ENCODE measurements at regions of chr10 and their contacts with region 1.

Region 1: GRCh38 chr10:131874991-131875451 is 25.8 kb upstream of the PPP2R2D start:
- DNase-seq: peak; percentile 81
- H3K4me3 Mint-ChIP-seq: no peak overlapping the region
- H3K27ac Mint-ChIP-seq: no peak overlapping the region
- H3K4me1 Mint-ChIP-seq: peaks cover 3% of the 10 kb centered on the region
- H3K27me3 Mint-ChIP-seq: peaks cover 13% of the 10 kb centered on the region

Region 2: DNA sequence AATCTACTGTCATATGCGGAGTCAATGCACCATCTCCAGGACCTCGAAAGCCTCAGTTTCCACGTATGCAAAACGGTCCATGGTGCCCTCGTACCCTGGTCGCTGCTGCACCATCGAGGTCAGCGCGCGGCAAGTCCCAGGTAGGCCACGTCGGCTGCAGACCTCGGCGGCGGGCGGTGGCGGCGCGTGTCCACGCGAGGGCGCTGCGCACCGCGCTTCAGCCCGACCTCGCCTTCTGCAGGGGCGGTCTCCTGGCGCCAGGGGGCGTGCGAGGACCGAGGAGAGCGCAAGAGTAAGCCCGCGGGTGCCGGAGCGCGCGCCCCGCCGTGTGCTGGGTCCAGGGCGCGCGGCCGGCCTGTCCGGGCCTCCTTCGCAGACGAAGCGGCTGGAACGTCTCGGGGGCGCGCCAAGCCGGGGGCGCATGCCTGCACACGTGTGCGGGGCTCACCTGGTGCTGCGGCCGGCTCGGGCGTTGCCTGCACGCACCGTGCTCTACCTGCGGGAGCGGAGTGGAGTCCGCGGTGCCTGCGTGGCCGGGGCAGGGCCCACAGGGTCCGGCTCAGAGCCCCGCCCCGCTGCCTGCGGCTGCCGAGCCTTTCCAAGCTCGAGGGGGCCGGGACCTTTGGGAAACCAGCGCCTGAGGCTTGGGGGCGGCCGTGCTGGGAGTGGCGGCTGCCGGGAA is 1684.8 kb before region 1 on chr10:
- CTCF ChIA-PET with region 1: no interaction called
- intact Hi-C with region 1: loop called (anchors 1 kb)
- DNase-seq: peak; percentile 88
- H3K4me3 Mint-ChIP-seq: peak overlapping the region; percentile 15
- H3K27ac Mint-ChIP-seq: no peak overlapping the region
- H3K4me1 Mint-ChIP-seq: peaks cover 3% of the 10 kb centered on the region
- H3K27me3 Mint-ChIP-seq: peaks cover 6% of the 10 kb centered on the region

Region 3: DNA sequence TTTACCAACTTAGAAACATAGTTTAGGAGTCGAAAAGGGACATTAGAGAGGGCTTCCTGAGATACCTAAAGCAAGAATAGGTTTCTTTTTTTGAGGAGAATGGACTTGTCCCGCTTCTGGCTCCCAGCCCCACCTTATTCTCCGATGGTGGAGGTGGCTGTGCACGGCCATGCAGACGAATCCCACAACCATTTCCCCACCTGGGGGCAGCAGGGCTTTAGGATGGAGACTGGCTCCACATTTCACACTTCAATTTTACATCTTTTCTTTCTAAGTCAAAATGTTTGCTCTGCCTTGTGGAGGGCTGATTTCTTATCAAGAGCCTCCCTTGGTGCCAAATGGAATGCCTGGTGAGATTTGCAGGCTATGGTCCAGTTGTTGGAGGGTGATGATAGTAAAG is 1620.4 kb before region 1 on chr10:
- CTCF ChIA-PET with region 1: no interaction called
- intact Hi-C with region 1: loop called (anchors 10 kb)
- DNase-seq: peak; percentile 62
- H3K4me3 Mint-ChIP-seq: no peak overlapping the region
- H3K27ac Mint-ChIP-seq: no peak overlapping the region
- H3K4me1 Mint-ChIP-seq: no peaks in the 10 kb centered on the region
- H3K27me3 Mint-ChIP-seq: no peaks in the 10 kb centered on the region

Region 4: GRCh38 chr10:131242007-131242406 is 633.0 kb before region 1 on chr10:
- CTCF ChIA-PET with region 1: no interaction called
- intact Hi-C with region 1: loop called (anchors 2 kb)
- DNase-seq: peak; percentile 14
- H3K4me3 Mint-ChIP-seq: no peak overlapping the region
- H3K27ac Mint-ChIP-seq: no peak overlapping the region
- H3K4me1 Mint-ChIP-seq: no peaks in the 10 kb centered on the region
- H3K27me3 Mint-ChIP-seq: peaks cover 11% of the 10 kb centered on the region

Region 5: GRCh38 chr10:131453594-131454355 is 421.2 kb before region 1 on chr10:
- CTCF ChIA-PET with region 1: no interaction called
- intact Hi-C with region 1: loop called (anchors 1 kb)
- DNase-seq: peak; percentile 91
- H3K4me3 Mint-ChIP-seq: peak overlapping the region; percentile 38
- H3K27ac Mint-ChIP-seq: no peak overlapping the region
- H3K4me1 Mint-ChIP-seq: peaks cover 10% of the 10 kb centered on the region
- H3K27me3 Mint-ChIP-seq: peaks cover 23% of the 10 kb centered on the region

Region 6: GRCh38 chr10:131514454-131514853 is 360.6 kb before region 1 on chr10:
- CTCF ChIA-PET with region 1: no interaction called
- intact Hi-C with region 1: no loop called
- DNase-seq: no peak
- H3K4me3 Mint-ChIP-seq: no peak overlapping the region
- H3K27ac Mint-ChIP-seq: no peak overlapping the region
- H3K4me1 Mint-ChIP-seq: no peaks in the 10 kb centered on the region
- H3K27me3 Mint-ChIP-seq: peaks cover 2% of the 10 kb centered on the region

Region 7: DNA sequence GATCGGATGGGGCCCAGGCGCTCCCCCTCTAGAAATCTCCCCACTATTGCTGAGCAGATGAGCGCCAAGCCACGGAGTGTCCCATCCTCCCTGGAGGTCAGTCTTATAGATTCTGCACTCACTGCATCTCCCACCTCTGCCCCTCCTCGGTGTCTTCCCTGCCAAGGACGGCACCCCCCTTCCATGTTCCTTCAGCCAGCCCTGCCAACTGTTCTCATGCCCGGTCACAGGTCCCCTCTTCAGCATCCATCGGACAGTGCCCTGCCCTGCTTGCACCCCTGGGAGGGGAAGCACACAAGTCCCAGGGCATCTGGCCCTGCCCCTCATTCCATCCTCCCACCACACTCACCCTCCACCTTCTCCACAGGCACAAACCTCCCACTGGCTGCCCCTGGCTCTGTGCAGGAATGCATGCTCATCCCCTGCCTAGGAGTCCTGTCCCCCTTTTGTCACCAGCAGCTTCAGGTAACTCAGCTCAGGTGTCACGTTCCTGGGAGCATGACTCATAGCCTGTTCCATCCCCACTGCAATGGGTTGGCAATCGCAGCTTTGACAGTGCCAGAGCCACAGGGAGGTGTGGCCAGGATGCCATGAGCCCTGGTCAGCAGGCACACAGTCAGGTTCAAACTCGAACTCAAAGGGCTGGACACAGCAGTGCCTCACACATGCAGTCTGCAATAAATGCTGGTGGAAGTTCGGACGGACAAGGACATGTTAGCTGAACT is 328.8 kb before region 1 on chr10:
- CTCF ChIA-PET with region 1: no interaction called
- intact Hi-C with region 1: no loop called
- DNase-seq: no peak
- H3K4me3 Mint-ChIP-seq: no peak overlapping the region
- H3K27ac Mint-ChIP-seq: no peak overlapping the region
- H3K4me1 Mint-ChIP-seq: no peaks in the 10 kb centered on the region
- H3K27me3 Mint-ChIP-seq: peaks cover 7% of the 10 kb centered on the region

Region 8: DNA sequence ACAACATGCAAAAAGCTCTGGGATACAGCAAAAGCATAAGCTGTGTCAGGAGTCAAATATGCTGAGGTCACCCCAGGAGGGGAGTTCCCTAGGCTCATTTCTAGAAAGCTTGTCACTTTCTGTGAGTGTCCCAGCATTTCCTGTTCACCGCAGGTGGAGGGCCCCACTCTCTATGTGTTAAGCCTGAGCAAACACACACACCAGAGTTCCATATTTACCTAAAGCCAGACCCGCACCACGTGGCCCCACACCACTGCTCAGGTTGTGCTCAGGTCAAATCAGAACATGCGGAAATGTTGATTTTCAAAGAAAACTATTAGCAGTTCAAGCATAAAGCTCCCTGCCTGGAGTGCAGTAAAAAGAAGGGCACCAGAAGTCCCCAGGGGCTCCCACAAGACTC is 233.8 kb before region 1 on chr10:
- CTCF ChIA-PET with region 1: no interaction called
- intact Hi-C with region 1: loop called (anchors 10 kb)
- DNase-seq: peak; percentile 63
- H3K4me3 Mint-ChIP-seq: no peak overlapping the region
- H3K27ac Mint-ChIP-seq: no peak overlapping the region
- H3K4me1 Mint-ChIP-seq: peaks cover 6% of the 10 kb centered on the region
- H3K27me3 Mint-ChIP-seq: no peaks in the 10 kb centered on the region

Region 9: GRCh38 chr10:132023092-132023811 is 148.2 kb after region 1 on chr10:
- CTCF ChIA-PET with region 1: interaction called, 12 read pairs
- intact Hi-C with region 1: no loop called
- DNase-seq: peak; percentile 86
- H3K4me3 Mint-ChIP-seq: no peak overlapping the region
- H3K27ac Mint-ChIP-seq: no peak overlapping the region
- H3K4me1 Mint-ChIP-seq: peaks cover 9% of the 10 kb centered on the region
- H3K27me3 Mint-ChIP-seq: peaks cover 22% of the 10 kb centered on the region